Psoas muscle (tissue), 8 donors: ENCODE measurements at regions of chr2 and their contacts with region 1.

Region 1: GRCh38 chr2:123738643-123739042 is 286.4 kb upstream of the CNTNAP5 start:
- DNase-seq: no peak
- ATAC-seq: no peak
- H3K4me3 ChIP-seq: no peak overlapping the region
- H3K27ac ChIP-seq: no peak overlapping the region
- H3K4me1 ChIP-seq: no peaks in the 10 kb centered on the region
- H3K27me3 ChIP-seq: no peaks in the 10 kb centered on the region
- CTCF ChIP-seq: no peak

Region 2: GRCh38 chr2:123723706-123724105 is 14.9 kb before region 1 on chr2:
- intact Hi-C with region 1: loop called in 1 of 2 experiments (anchors 1 kb)
- DNase-seq: no peak
- ATAC-seq: no peak
- H3K4me3 ChIP-seq: no peak overlapping the region
- H3K27ac ChIP-seq: no peak overlapping the region
- H3K4me1 ChIP-seq: no peaks in the 10 kb centered on the region
- H3K27me3 ChIP-seq: no peaks in the 10 kb centered on the region
- CTCF ChIP-seq: no peak